ENCODE measurements at regions of chr16 and their contacts with region 1.

Region 1: DNA sequence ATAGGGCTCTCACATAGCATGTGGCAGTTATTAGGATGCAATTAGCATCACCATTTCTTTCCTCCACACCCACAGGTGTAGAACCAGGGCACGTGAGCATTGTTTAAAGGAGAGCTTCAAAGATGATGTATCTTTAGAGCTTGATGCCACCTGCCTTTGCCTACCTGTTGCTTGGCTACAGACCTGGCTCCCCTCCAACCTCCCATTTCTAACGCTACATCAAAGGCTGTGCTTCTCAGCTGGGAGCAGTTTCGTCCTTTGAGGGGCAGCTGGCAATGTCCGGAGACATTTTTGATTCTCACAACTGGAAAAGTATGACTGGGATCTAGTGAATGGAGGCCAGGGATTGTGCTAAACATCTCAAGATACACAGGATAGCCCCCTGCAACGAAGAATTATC is 78.5 kb upstream of the CLEC3A start:
- DNase-seq: no peak
- H3K4me3 ChIP-seq: no peak overlapping the region
- H3K27ac ChIP-seq: no peak overlapping the region
- H3K27me3 ChIP-seq: no peaks in the 10 kb centered on the region
- CTCF ChIP-seq: no peak

Region 2: GRCh38 chr16:77722309-77723107 is 221.3 kb before region 1 on chr16 and contains the start of gene NUDT7:
- CTCF ChIA-PET with region 1: no interaction called
- POLR2A ChIA-PET with region 1: no interaction called
- DNase-seq: peak; percentile 94
- H3K4me3 ChIP-seq: peak within 1 kb of the TSS; percentile 67
- H3K27ac ChIP-seq: peak within 1 kb of the TSS; percentile 88
- H3K27me3 ChIP-seq: no peaks in the 10 kb centered on the region
- CTCF ChIP-seq: peak; percentile 32
- polyA plus RNA-seq, gene NUDT7: 18.3 and 19.3 TPM in 2 replicates

Region 3: GRCh38 chr16:77918809-77919707 is 24.7 kb before region 1 on chr16:
- CTCF ChIA-PET with region 1: no interaction called
- POLR2A ChIA-PET with region 1: no interaction called
- DNase-seq: no peak
- H3K4me3 ChIP-seq: no peak overlapping the region
- H3K27ac ChIP-seq: no peak overlapping the region
- H3K27me3 ChIP-seq: no peaks in the 10 kb centered on the region
- CTCF ChIP-seq: no peak

Region 4: DNA sequence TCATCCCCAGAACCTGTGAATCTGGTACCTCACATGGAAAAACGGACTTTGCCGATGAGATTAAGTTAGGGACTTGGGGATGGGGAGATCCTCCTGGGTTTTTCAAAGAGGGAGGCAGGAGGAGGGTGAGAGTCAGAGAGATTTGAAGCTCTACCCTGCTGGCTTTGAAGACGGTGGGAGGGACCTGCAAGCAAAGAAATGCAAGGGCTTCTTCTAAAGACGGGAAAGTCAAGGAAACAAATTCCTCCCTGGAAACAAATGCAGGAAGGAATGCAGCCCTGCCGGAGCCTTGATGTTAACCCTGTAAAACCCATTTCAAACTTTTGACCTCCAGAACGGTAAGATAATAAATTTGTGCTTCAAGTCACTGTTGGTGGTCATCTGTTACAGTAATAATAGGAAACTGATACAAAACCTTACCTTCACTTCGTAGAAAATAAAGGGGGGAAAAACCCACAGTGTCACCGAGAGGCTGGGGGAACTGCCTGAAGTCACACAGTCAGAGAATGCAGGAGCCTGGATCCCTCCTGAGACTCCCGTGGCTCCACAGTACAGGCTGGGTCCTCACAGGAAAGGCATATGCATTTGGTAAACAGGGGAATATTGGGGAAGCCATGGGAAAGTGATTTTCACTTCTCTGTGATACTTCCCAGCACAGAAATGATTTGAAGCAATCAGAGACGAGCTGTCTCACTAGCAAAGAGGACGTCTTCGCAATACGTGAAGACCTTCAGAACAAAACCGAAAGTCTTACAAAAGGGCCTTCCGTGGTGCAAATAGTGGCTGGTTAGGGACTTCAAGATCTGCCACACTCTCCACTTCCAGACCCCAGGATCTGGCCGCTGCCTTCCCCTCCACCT is 19.6 kb after region 1 on chr16:
- CTCF ChIA-PET with region 1: no interaction called
- POLR2A ChIA-PET with region 1: interaction called, 11 read pairs
- DNase-seq: no peak
- H3K4me3 ChIP-seq: no peak overlapping the region
- H3K27ac ChIP-seq: no peak overlapping the region
- H3K27me3 ChIP-seq: no peaks in the 10 kb centered on the region
- CTCF ChIP-seq: no peak

Region 5: DNA sequence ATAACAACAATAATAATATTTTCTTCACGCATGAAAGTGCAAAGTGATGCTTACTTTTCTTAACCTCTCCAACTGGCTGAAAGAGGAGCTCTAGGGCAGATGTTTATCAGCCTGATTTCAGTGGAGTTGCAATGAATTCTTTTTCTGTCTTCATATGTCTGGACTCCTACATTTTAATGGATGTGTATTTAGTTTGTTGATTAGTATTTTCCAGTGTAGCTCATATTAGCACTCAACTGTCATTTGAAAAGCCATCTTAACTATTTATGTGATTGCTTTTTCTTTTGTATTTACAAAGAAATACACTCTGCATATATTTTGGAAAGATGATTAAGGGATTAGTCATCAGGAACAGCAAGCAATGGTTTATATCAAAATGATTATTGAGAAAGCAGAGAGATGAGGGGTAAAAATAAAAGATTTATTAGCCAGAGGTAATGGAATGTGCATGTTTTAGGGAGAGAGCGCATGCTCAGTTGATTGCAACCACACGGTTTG is 226.7 kb after region 1 on chr16:
- CTCF ChIA-PET with region 1: no interaction called
- POLR2A ChIA-PET with region 1: no interaction called
- DNase-seq: no peak
- H3K4me3 ChIP-seq: no peak overlapping the region
- H3K27ac ChIP-seq: no peak overlapping the region
- H3K27me3 ChIP-seq: no peaks in the 10 kb centered on the region
- CTCF ChIP-seq: no peak